ENCODE measurements at regions of chr2 and their contacts with region 1.

Region 1: DNA sequence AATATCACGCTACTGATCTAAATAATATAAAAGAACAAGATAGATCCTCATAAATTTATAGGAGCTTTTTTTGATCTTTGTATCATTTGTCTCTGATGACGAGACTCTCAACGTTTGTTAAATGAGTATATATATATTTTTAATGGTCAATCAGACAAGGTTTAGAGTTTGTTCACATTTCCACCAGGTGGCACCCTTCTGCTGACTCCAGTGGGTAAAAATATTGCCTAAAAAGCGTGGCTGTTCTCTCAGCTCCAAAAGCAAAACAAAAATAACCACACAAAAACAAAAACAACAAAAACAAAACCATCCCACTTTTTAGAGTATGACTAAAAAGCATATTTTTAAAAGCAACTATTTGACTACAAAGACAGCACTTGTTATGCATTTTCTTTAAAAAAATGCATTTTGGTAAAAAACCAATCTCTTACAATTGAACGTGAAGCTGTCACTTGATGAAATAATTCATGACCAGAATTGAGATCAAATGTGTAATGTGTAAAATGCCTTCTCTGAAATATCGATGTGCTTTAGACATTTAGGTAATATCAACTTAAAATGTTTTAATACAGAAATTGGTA is 723.2 kb downstream of the DPP10 start:
- DNase-seq: no peak
- H3K4me3 ChIP-seq: no peak overlapping the region
- H3K27ac ChIP-seq: no peak overlapping the region
- H3K4me1 ChIP-seq: peaks cover 0 to 3% (median 1%) of the 10 kb centered on the region in 4 experiments; a peak in 4 of 7 replicates
- H3K27me3 ChIP-seq: peaks cover 2 to 22% (median 20%) of the 10 kb centered on the region in 4 experiments
- CTCF ChIP-seq: peak in 2 of 3 experiments; percentile 43 to 56; a peak in 3 of 4 replicates
- EP300 ChIP-seq: no peak
- POLR2A ChIP-seq: no peak
- RAD21 ChIP-seq: peak; percentile 71 to 75

Region 2: GRCh38 chr2:115183144-115183543 is 17.5 kb after region 1 on chr2:
- CTCF ChIA-PET with region 1: interaction called, 35 read pairs
- POLR2A ChIA-PET with region 1: no interaction called
- DNase-seq: no peak
- H3K4me3 ChIP-seq: no peak overlapping the region
- H3K27ac ChIP-seq: no peak overlapping the region
- H3K4me1 ChIP-seq: no peaks in the 10 kb centered on the region; a peak in 3 of 7 replicates
- H3K27me3 ChIP-seq: no peaks in the 10 kb centered on the region
- CTCF ChIP-seq: peak in 2 of 3 experiments; percentile 34 to 59; a peak in 2 of 4 replicates
- EP300 ChIP-seq: no peak
- POLR2A ChIP-seq: no peak
- RAD21 ChIP-seq: peak; percentile 46 to 58

Region 3: GRCh38 chr2:115219296-115219695 is 53.7 kb after region 1 on chr2:
- CTCF ChIA-PET with region 1: no interaction called
- POLR2A ChIA-PET with region 1: no interaction called
- DNase-seq: no peak
- H3K4me3 ChIP-seq: no peak overlapping the region
- H3K27ac ChIP-seq: no peak overlapping the region
- H3K4me1 ChIP-seq: peaks cover 0 to 7% (median 4%) of the 10 kb centered on the region in 4 experiments; a peak in 5 of 7 replicates
- H3K27me3 ChIP-seq: no peaks in the 10 kb centered on the region
- CTCF ChIP-seq: no peak
- EP300 ChIP-seq: no peak
- POLR2A ChIP-seq: no peak
- RAD21 ChIP-seq: no peak

Measured in H1 (cell line).